ENCODE measurements at regions of chr1 and their contacts with region 1.

Region 1: GRCh38 chr1:26790551-26790953 is 2.8 kb downstream of the PIGV start:
- DNase-seq: no peak
- H3K4me3 ChIP-seq: no peak overlapping the region
- H3K27ac ChIP-seq: no peak overlapping the region
- H3K4me1 ChIP-seq: peaks cover 10 to 21% (median 15%) of the 10 kb centered on the region in 3 donors
- H3K27me3 ChIP-seq: no peaks in the 10 kb centered on the region
- CTCF ChIP-seq: no peak

Region 2: DNA sequence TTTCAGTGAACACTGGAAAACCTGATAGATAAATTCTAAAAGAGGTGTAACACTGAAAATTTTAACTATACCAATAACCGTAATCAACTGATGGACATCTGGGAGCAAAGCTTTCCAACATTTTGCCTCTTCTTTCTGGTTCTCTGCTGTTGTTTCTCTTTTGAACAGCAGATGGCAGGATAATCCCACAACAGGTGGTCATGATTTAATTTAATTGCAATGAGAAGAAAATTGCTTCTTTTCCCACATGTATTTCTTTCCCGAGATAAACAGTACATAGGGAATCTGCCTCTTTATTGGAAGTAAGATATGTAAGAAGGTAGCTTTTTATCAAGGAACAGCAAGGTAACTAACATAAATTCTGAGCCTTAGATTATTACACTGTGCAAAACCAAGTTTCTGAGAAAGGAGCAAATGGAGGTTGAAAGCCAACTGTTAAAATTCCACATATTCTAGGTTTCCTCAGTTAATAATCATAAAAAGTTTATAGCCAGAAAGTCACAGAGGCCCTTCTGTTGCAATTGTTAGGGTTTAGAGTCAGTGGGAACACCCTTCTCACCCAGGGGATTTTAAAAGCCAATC is 188.1 kb before region 1 on chr1:
- intact Hi-C with region 1: loop called (anchors 5 kb)
- DNase-seq: peak in 3 of 5 donors; percentile 57 to 88 (median 85)
- H3K4me3 ChIP-seq: no peak overlapping the region
- H3K27ac ChIP-seq: no peak overlapping the region
- H3K4me1 ChIP-seq: no peaks in the 10 kb centered on the region
- H3K27me3 ChIP-seq: no peaks in the 10 kb centered on the region
- CTCF ChIP-seq: peak; percentile 93

Region 3: DNA sequence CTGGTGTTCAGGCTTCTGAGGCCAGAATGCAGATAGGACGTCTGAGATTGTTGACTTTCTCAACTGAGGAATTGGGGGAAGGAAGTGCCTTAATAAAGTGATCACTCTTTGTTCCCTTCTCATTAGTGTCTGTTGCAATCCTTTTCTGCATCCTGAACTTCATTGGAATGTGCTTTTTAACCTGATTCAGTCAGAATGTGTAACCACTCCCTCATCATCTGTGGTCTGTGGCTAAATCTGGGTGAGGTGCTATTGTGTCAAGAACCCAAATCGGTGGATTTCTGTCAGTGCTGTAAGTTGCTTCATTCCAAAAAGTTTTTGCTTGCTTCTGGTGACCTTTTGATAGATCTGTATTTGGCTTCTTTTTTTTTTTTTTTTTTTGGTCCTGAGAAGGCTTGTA is 56.6 kb before region 1 on chr1:
- intact Hi-C with region 1: no loop called
- DNase-seq: no peak
- H3K4me3 ChIP-seq: no peak overlapping the region
- H3K27ac ChIP-seq: no peak overlapping the region
- H3K4me1 ChIP-seq: no peaks in the 10 kb centered on the region
- H3K27me3 ChIP-seq: no peaks in the 10 kb centered on the region
- CTCF ChIP-seq: no peak

Region 4: DNA sequence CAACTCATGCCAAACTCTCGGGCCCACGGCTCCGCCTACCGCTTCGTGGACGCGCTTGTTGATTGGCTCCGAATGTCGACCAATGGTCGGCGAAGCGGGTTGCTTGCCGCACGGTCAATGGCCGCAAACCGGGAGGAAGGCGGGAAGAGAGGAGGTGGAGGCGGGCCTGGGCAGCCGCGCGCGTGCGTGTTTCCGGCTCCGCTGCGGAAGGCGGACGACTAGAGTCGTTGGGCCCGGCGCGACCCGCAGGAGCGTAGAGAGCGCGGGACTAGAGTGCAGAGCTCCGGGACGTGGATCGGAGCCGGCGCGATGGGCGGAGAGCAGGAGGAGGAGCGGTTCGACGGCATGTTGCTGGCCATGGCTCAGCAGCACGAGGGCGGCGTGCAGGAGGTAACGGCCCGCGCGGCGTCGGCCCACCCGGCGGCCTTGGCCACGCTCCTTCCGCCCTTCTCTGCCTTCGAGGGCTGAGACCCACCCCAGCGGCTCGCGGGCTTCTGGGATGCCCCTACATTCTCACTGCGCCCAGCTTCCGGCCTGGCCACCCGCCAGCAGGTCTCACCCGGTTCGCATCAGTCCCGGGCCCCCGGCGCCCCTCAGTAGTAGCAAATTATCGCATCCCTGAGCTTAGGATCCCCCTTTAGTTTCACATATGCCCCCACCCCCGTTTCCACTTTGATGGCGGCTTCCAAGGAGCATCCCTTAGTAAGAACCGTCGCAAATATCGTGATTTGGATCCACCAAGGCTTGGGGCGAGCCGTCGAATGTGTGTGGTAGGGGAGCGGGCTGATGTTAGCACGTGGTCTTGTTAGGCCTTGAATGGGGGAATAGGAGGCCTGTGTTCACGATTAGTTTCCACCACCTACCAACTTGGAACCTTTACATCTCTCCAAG is 131.2 kb after region 1 on chr1 and contains the start of gene NUDC:
- intact Hi-C with region 1: no loop called
- DNase-seq: peak; percentile 96 to 99 (median 98)
- H3K4me3 ChIP-seq: peak within 1 kb of the TSS; percentile 82 to 89 (median 82)
- H3K27ac ChIP-seq: peak within 1 kb of the TSS; percentile 97 to 99
- H3K4me1 ChIP-seq: peaks cover 4 to 14% (median 9%) of the 10 kb centered on the region in 3 donors
- H3K27me3 ChIP-seq: no peaks in the 10 kb centered on the region
- CTCF ChIP-seq: no peak
- total RNA-seq, gene NUDC: 61.5 TPM

Measured in kidney (tissue), 22 donors.